ENCODE measurements at regions of chr3 and their contacts with region 1.

Region 1: GRCh38 chr3:69058180-69058946 is 6.2 kb upstream of the TMF1 start:
- DNase-seq: peak in 4 of 14 experiments; percentile 17 to 78 (median 57)
- ATAC-seq: peak; percentile 97
- H3K4me3 ChIP-seq: no peak overlapping the region
- H3K4me3 Mint-ChIP-seq: peak overlapping the region; percentile 32
- H3K27ac ChIP-seq: peak overlapping the region; percentile 32 to 67
- H3K27ac Mint-ChIP-seq: peak overlapping the region; percentile 84
- H3K4me1 ChIP-seq: peaks cover 15% of the 10 kb centered on the region
- H3K4me1 Mint-ChIP-seq: peaks cover 35% of the 10 kb centered on the region
- H3K27me3 ChIP-seq: no peaks in the 10 kb centered on the region
- H3K27me3 Mint-ChIP-seq: no peaks in the 10 kb centered on the region
- CTCF ChIP-seq: no peak

Region 2: GRCh38 chr3:69092030-69092516 is 33.7 kb after region 1 on chr3:
- CTCF ChIA-PET with region 1: interaction called, 4 read pairs
- POLR2A ChIA-PET with region 1: interaction called, 52 read pairs
- intact Hi-C with region 1: loop called in 1 of 2 experiments (anchors 2 kb)
- DNase-seq: peak in 5 of 14 experiments; percentile 9 to 69 (median 66)
- ATAC-seq: peak; percentile 71
- H3K4me3 ChIP-seq: peak overlapping the region; percentile 40
- H3K4me3 Mint-ChIP-seq: peak overlapping the region; percentile 80
- H3K27ac ChIP-seq: peak overlapping the region; percentile 77 to 78
- H3K27ac Mint-ChIP-seq: peak overlapping the region; percentile 92
- H3K4me1 ChIP-seq: peaks cover 90% of the 10 kb centered on the region
- H3K4me1 Mint-ChIP-seq: peaks cover 89% of the 10 kb centered on the region
- H3K27me3 ChIP-seq: no peaks in the 10 kb centered on the region
- H3K27me3 Mint-ChIP-seq: no peaks in the 10 kb centered on the region
- CTCF ChIP-seq: no peak

Region 3: GRCh38 chr3:69541711-69542220 is 483.4 kb after region 1 on chr3:
- CTCF ChIA-PET with region 1: no interaction called
- POLR2A ChIA-PET with region 1: no interaction called
- intact Hi-C with region 1: no loop called
- DNase-seq: peak in 1 of 14 experiments; percentile 10
- ATAC-seq: no peak
- H3K4me3 ChIP-seq: peak overlapping the region; percentile 10
- H3K4me3 Mint-ChIP-seq: no peak overlapping the region
- H3K27ac ChIP-seq: no peak overlapping the region
- H3K27ac Mint-ChIP-seq: no peak overlapping the region
- H3K4me1 ChIP-seq: no peaks in the 10 kb centered on the region
- H3K4me1 Mint-ChIP-seq: peaks cover 6% of the 10 kb centered on the region
- H3K27me3 ChIP-seq: peaks cover 14 to 31% of the 10 kb centered on the region in 2 experiments
- H3K27me3 Mint-ChIP-seq: peaks cover 52% of the 10 kb centered on the region
- CTCF ChIP-seq: no peak

Measured in CD4-positive, alpha-beta T cell (primary cell).